ENCODE measurements at regions of chr11 and their contacts with region 1.

Region 1: DNA sequence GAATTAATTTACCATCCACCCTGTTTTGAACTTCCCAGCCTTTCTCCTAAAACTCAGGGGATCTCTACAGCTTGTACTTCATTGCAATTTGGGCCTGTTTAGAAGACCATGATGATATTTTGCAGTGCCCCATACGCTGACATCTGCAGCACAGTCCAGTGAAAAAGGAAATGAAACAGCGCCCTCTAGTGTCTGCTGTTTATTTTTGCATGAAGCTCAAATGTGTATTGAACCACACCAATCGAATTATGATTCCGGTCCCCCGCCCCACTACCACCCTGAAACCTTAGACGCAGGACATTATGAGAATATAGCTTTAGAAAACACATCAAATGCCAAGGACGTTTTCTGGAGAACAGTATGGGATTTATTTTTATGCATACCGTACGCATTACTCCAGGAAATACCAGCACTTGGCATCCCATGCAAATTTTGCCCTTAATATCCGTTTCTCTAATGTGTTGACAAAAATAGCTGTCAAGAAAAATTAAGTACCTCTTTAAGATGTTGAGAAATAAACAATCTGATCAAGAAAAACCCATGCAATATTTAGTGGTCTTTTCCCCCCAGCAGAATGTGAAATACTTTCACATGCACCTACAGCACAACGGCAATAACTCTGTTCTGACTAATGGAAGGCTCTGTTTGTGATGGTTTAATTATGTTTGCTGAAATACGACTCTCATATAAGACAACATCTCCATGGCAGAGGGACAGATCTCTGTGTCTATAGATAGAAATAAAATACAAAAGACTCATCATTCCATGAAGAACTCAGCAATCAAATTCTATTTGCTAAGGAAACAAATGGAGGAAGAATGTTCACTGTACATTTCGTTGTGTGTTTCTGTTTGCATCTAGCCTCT is 93.9 kb downstream of the TECTA start:
- DNase-seq: peak in 4 of 5 donors; percentile 43 to 57 (median 46)
- H3K4me3 ChIP-seq: no peak overlapping the region
- H3K4me3 Mint-ChIP-seq: no peak overlapping the region
- H3K27ac ChIP-seq: no peak overlapping the region
- H3K27ac Mint-ChIP-seq: no peak overlapping the region
- H3K4me1 ChIP-seq: no peaks in the 10 kb centered on the region
- H3K4me1 Mint-ChIP-seq: peaks cover 0 to 3% (median 3%) of the 10 kb centered on the region in 4 donors
- H3K27me3 ChIP-seq: peaks cover 3% of the 10 kb centered on the region
- H3K27me3 Mint-ChIP-seq: peaks cover 17 to 24% of the 10 kb centered on the region in 2 donors

Region 2: DNA sequence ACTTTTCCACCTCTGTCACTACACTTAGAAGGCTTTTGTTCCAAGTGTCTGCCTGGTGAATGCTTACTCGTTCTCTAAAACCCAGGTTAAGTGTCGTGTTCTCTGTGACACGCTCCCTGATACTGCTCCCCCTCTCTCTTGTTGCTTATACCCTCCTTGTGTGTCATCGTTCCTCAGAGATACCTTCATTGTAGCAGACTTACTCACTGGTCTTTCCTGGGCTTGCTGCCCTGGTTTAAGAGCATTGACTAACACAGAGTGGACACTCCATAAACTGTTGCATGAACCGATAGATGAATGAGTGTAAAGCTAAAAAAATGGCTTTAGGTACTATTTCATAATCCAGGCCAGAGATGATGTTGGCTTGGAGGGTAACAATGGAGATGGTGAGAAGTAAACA is 512.1 kb before region 1 on chr11:
- CTCF ChIA-PET with region 1: no interaction called
- POLR2A ChIA-PET with region 1: no interaction called
- intact Hi-C with region 1: loop called (anchors 10 kb)
- DNase-seq: no peak
- H3K4me3 ChIP-seq: no peak overlapping the region
- H3K4me3 Mint-ChIP-seq: no peak overlapping the region
- H3K27ac ChIP-seq: no peak overlapping the region
- H3K27ac Mint-ChIP-seq: no peak overlapping the region
- H3K4me1 ChIP-seq: no peaks in the 10 kb centered on the region
- H3K4me1 Mint-ChIP-seq: no peaks in the 10 kb centered on the region
- H3K27me3 ChIP-seq: no peaks in the 10 kb centered on the region
- H3K27me3 Mint-ChIP-seq: peaks cover 9 to 20% of the 10 kb centered on the region in 2 donors

Region 3: DNA sequence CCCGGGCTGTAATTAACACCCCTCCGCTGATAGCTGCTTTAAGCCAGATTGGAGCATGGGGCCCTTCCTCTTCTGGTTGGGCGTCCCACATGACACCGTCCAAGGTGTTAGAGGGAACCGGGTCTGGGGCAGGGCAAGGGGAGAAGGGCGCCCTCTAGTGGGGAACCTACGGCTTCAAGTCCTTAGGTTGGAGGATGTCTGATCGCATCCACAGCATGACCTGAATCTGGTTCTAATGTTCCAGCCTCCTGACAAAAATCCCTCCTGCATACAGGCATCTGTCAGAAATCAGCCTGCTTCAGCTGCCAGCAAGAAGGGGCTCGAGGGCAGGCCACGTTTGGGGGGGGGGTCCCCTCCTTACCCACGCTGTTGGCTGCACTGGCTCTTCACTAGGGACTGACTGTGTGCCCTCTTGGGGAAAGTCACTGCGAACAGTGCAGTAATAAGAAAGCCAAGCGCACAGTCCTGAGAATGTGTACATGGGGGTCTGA is 265.3 kb before region 1 on chr11:
- CTCF ChIA-PET with region 1: no interaction called
- POLR2A ChIA-PET with region 1: no interaction called
- intact Hi-C with region 1: loop called (anchors 2 kb)
- DNase-seq: peak in 2 of 5 donors; percentile 11 to 28
- H3K4me3 ChIP-seq: no peak overlapping the region
- H3K4me3 Mint-ChIP-seq: no peak overlapping the region
- H3K27ac ChIP-seq: no peak overlapping the region
- H3K27ac Mint-ChIP-seq: no peak overlapping the region
- H3K4me1 ChIP-seq: no peaks in the 10 kb centered on the region
- H3K4me1 Mint-ChIP-seq: no peaks in the 10 kb centered on the region
- H3K27me3 ChIP-seq: no peaks in the 10 kb centered on the region
- H3K27me3 Mint-ChIP-seq: peaks cover 3 to 7% of the 10 kb centered on the region in 2 donors

Region 4: DNA sequence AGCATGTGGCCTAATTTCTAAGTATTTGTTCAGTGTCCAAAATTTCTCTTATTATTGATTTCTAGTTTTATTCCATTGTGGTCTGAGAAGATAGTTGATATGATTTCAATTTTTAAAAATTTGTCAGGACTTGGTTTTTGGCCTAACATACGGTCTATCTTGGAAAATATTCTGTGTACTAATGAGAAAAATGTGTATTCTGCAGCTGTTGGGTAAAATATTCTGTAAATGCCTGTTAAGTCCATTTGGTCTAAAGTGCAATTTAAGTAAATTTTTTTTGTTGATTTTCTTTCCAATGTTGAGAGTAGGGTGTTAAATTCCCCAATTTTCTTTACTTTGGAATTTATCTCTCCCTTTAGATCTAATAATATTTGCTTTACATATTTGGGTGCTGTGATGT is 15.7 kb before region 1 on chr11:
- CTCF ChIA-PET with region 1: interaction called, 14 read pairs
- POLR2A ChIA-PET with region 1: no interaction called
- intact Hi-C with region 1: no loop called
- DNase-seq: no peak
- H3K4me3 ChIP-seq: no peak overlapping the region
- H3K4me3 Mint-ChIP-seq: no peak overlapping the region
- H3K27ac ChIP-seq: no peak overlapping the region
- H3K27ac Mint-ChIP-seq: no peak overlapping the region
- H3K4me1 ChIP-seq: no peaks in the 10 kb centered on the region
- H3K4me1 Mint-ChIP-seq: no peaks in the 10 kb centered on the region
- H3K27me3 ChIP-seq: peaks cover 3% of the 10 kb centered on the region
- H3K27me3 Mint-ChIP-seq: peaks cover 2 to 10% of the 10 kb centered on the region in 2 donors

Region 5: DNA sequence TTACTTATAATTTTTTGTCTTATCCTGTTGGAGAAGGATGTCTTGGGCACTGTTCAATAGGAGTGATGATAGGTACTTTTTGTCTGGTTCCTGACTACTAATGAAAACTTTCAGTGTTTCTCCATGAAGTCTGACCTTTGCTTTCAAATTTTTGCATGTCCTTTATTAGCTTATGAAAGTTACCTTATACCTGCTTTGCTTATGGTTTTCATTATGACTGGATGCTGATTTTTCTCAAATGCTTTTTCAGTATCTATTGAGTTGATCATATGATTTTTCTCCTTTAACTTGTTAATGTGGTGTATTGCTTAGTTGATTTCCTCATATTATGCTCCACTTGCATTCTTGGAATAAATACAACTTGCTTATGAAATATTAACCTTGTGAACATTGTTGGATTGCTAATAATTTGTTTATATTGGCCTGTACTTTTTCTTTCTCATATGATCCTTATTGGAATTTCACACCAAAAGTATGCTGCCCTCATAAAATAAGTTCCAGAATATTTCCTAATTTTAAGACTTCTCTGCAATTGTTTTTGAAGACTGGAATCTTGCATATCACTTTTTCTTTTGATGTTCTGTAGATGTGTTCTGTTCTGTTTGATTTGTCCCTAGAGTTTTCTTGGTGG is 12.6 kb after region 1 on chr11:
- CTCF ChIA-PET with region 1: interaction called, 16 read pairs
- POLR2A ChIA-PET with region 1: no interaction called
- intact Hi-C with region 1: no loop called
- DNase-seq: no peak
- H3K4me3 ChIP-seq: no peak overlapping the region
- H3K4me3 Mint-ChIP-seq: no peak overlapping the region
- H3K27ac ChIP-seq: no peak overlapping the region
- H3K27ac Mint-ChIP-seq: no peak overlapping the region
- H3K4me1 ChIP-seq: no peaks in the 10 kb centered on the region
- H3K4me1 Mint-ChIP-seq: no peaks in the 10 kb centered on the region
- H3K27me3 ChIP-seq: peaks cover 6% of the 10 kb centered on the region
- H3K27me3 Mint-ChIP-seq: peaks cover 11 to 15% of the 10 kb centered on the region in 2 donors

Region 6: DNA sequence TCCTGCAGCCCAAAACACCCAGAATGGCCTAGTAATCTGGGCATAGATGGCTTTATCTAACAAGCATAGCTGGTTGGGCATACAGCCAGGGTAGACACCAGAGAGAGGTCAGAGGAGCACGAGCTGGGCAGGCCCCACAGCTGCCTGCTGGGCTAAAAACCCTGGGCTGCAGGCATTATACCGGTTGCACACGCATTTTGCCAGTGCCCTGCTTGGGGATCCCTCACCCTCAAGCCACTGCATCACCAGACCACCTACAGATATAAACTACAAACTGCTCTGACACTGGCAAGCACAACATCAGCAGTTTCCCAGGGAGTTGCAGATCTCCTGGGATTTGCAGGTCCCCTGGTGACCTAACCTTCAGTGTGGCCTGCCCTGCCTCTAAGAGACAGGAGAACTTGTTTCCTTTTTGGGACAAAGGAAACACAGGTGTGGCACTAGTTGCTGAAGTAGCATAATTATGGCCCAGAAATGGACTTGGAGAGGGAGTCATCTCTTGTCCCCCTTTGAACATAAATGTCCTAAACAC is 18.5 kb after region 1 on chr11:
- CTCF ChIA-PET with region 1: interaction called, 11 read pairs
- POLR2A ChIA-PET with region 1: no interaction called
- intact Hi-C with region 1: no loop called
- DNase-seq: no peak
- H3K4me3 ChIP-seq: no peak overlapping the region
- H3K4me3 Mint-ChIP-seq: no peak overlapping the region
- H3K27ac ChIP-seq: no peak overlapping the region
- H3K27ac Mint-ChIP-seq: no peak overlapping the region
- H3K4me1 ChIP-seq: no peaks in the 10 kb centered on the region
- H3K4me1 Mint-ChIP-seq: no peaks in the 10 kb centered on the region
- H3K27me3 ChIP-seq: peaks cover 6% of the 10 kb centered on the region
- H3K27me3 Mint-ChIP-seq: peaks cover 18 to 22% of the 10 kb centered on the region in 2 donors

Region 7: GRCh38 chr11:121270001-121270678 is 75.2 kb after region 1 on chr11:
- CTCF ChIA-PET with region 1: no interaction called
- POLR2A ChIA-PET with region 1: no interaction called
- intact Hi-C with region 1: no loop called
- DNase-seq: peak in 1 of 5 donors; percentile 16
- H3K4me3 ChIP-seq: no peak overlapping the region
- H3K4me3 Mint-ChIP-seq: no peak overlapping the region
- H3K27ac ChIP-seq: no peak overlapping the region
- H3K27ac Mint-ChIP-seq: no peak overlapping the region
- H3K4me1 ChIP-seq: no peaks in the 10 kb centered on the region
- H3K4me1 Mint-ChIP-seq: peaks cover 2 to 5% (median 5%) of the 10 kb centered on the region in 4 donors
- H3K27me3 ChIP-seq: peaks cover 4% of the 10 kb centered on the region
- H3K27me3 Mint-ChIP-seq: peaks cover 26 to 44% of the 10 kb centered on the region in 2 donors

Measured in CD4-positive, alpha-beta memory T cell (primary cell).